ENCODE measurements at regions of chr16 and their contacts with region 1.

Region 1: GRCh38 chr16:3129137-3130131 is 5.4 kb upstream of the ZNF213 start:
- DNase-seq: peak; percentile 82
- H3K4me3 Mint-ChIP-seq: peak overlapping the region; percentile 91
- H3K27ac Mint-ChIP-seq: peak overlapping the region; percentile 87
- H3K4me1 Mint-ChIP-seq: peaks cover 66% of the 10 kb centered on the region
- H3K27me3 Mint-ChIP-seq: no peaks in the 10 kb centered on the region

Region 2: GRCh38 chr16:2795714-2796143 is 333.7 kb before region 1 on chr16:
- CTCF ChIA-PET with region 1: no interaction called
- POLR2A ChIA-PET with region 1: no interaction called
- DNase-seq: no peak
- H3K4me3 Mint-ChIP-seq: no peak overlapping the region
- H3K27ac Mint-ChIP-seq: no peak overlapping the region
- H3K4me1 Mint-ChIP-seq: no peaks in the 10 kb centered on the region
- H3K27me3 Mint-ChIP-seq: peaks cover 27% of the 10 kb centered on the region

Region 3: DNA sequence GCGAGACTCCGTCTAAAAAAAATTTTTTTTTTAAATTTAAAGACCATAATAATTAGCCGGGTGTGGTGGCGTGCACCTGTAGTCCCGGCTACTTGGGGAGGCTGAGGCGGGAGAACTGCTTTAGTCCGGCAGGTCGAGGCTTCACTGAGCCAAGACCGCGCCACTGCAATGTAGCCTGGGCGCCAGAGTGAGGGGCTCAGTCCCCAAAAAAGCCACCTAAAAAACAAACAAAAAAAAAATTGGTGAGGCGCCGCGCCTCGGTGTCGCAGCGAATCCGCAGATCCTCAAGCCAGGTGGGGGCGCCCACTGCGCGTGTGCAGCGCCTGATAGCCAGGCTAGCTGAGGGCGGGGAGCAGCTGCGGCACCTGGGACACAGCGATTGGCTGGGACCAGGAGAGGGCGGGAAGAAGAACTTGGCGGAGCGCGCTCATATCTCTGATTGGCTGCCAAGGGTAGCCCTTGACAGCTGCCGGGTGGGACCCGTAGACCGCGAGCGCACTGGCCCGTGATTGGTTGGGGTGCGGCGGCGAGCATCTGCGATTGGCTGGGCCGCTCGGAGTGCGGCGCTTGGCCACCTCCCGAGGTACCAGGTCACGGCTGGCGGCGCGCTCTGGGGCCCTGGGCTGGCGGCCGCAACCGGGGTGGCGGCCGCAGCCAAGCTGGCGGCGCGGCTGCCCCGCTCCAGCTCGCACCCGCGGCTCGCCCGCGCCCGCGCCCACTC is 125.7 kb before region 1 on chr16:
- CTCF ChIA-PET with region 1: interaction called, 20 read pairs
- POLR2A ChIA-PET with region 1: interaction called, 3 read pairs
- DNase-seq: peak; percentile 98
- H3K4me3 Mint-ChIP-seq: peak overlapping the region; percentile 72
- H3K27ac Mint-ChIP-seq: peak overlapping the region; percentile 16
- H3K4me1 Mint-ChIP-seq: peaks cover 33% of the 10 kb centered on the region
- H3K27me3 Mint-ChIP-seq: peaks cover 18% of the 10 kb centered on the region

Region 4: GRCh38 chr16:3045357-3045728 is 84.1 kb before region 1 on chr16:
- CTCF ChIA-PET with region 1: interaction called, 12 read pairs
- POLR2A ChIA-PET with region 1: interaction called, 15 read pairs
- DNase-seq: peak; percentile 61
- H3K4me3 Mint-ChIP-seq: peak overlapping the region; percentile 85
- H3K27ac Mint-ChIP-seq: peak overlapping the region; percentile 78
- H3K4me1 Mint-ChIP-seq: peaks cover 51% of the 10 kb centered on the region
- H3K27me3 Mint-ChIP-seq: peaks cover 24% of the 10 kb centered on the region

Region 5: DNA sequence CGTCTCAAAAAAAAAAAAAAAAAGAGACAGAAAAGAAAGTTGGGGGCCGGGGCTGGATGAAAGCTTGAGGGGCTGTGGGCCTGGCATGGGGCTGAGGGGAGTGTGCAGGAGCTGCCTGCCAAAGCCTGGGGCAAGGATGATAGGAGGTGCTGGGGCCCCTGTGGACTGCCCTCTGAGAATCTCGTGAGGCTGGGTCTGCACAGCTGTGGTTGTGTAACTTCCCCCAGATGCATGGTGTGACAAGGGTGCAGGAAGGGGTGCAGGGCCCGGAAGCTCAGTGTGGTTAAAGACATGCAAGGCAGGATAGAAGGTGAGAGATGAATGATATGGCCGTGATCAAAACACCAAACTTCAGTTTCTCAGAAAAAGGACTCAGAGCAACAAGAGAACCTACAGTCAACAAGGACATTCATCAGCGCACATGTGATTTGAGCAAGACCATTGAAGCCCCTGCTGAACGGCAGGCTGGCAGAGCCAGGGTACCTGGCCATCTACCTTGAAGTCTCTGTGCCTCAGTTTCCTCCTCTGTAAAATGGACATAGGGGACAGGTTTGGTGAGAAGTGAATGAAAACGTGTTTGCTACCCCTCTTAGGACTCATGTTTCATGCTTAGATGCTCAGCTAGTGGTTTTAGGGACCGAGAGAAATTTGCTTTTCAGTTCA is 54.4 kb before region 1 on chr16:
- CTCF ChIA-PET with region 1: interaction called, 62 read pairs
- POLR2A ChIA-PET with region 1: interaction called, 35 read pairs
- DNase-seq: peak; percentile 94
- H3K4me3 Mint-ChIP-seq: peak overlapping the region; percentile 77
- H3K27ac Mint-ChIP-seq: peak overlapping the region; percentile 100
- H3K4me1 Mint-ChIP-seq: peaks cover 88% of the 10 kb centered on the region
- H3K27me3 Mint-ChIP-seq: no peaks in the 10 kb centered on the region

Region 6: GRCh38 chr16:3094289-3095027 is 35.0 kb before region 1 on chr16:
- CTCF ChIA-PET with region 1: interaction called, 254 read pairs
- POLR2A ChIA-PET with region 1: interaction called, 10 read pairs
- DNase-seq: peak; percentile 68
- H3K4me3 Mint-ChIP-seq: peak overlapping the region; percentile 1
- H3K27ac Mint-ChIP-seq: peak overlapping the region; percentile 37
- H3K4me1 Mint-ChIP-seq: peaks cover 46% of the 10 kb centered on the region
- H3K27me3 Mint-ChIP-seq: no peaks in the 10 kb centered on the region

Region 7: GRCh38 chr16:3112058-3112880 is 17.2 kb before region 1 on chr16 and contains the start of gene ZNF205:
- CTCF ChIA-PET with region 1: interaction called, 28 read pairs
- POLR2A ChIA-PET with region 1: interaction called, 6 read pairs
- DNase-seq: no peak
- H3K4me3 Mint-ChIP-seq: no peak within 1 kb of the TSS
- H3K27ac Mint-ChIP-seq: no peak within 1 kb of the TSS
- H3K4me1 Mint-ChIP-seq: peaks cover 4% of the 10 kb centered on the region
- H3K27me3 Mint-ChIP-seq: peaks cover 27% of the 10 kb centered on the region
- total RNA-seq, gene ZNF205: not detected

Region 8: DNA sequence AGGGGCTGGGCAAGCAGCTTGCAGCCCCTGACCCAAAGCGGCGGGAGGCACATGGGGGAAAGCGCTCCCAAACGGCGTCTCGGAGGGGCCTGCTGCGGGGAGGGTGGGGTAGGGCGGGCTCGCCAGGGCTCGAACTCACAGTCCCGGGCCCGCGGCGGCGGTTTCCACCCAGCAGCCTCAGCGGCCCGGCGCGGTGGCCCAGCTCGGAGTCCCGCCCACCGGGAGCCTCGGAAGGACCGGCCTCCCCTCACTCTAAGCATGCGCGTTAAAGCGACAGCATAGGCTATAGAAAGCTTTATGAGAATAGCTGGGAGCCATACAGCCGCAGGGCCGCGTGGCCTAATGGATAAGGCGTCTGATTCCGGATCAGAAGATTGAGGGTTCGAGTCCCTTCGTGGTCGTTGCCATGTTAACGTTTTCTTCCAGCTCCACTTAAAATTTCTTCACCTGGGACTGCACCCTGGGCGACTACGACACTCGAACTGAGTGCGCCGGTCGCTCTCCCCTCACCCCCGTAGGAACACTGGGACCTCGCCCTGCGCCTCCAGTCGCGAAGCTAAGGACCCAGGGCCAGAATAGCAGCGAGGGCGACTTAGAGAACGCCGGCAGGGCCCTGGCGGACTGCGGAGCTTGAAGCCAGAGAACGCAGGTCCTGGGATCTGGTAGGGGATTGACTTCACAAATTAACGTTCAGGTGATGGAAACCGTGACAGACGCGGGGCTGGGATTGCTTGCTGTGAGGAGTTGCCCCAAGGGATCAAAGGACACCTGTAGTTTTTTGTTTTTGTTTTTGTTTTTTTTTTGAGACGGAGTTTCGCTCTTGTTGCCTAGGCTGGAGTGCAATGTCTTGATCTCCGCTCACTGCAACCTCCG is 21.1 kb after region 1 on chr16:
- CTCF ChIA-PET with region 1: interaction called, 56 read pairs
- POLR2A ChIA-PET with region 1: interaction called, 51 read pairs
- DNase-seq: peak; percentile 99
- H3K4me3 Mint-ChIP-seq: peak overlapping the region; percentile 81
- H3K27ac Mint-ChIP-seq: peak overlapping the region; percentile 82
- H3K4me1 Mint-ChIP-seq: peaks cover 37% of the 10 kb centered on the region
- H3K27me3 Mint-ChIP-seq: peaks cover 22% of the 10 kb centered on the region

Measured in activated CD4-positive, alpha-beta memory T cell treated with anti-CD3 and anti-CD28 coated beads, Interleukin-2, amount 10 ng/mL, durations not matched to agents 7 days and 5 days (primary cell).